A549 (cell line): ENCODE measurements at regions of chr5 and their contacts with region 1.

Region 1: GRCh38 chr5:140000332-140000731 is 42.8 kb downstream of the NRG2 start:
- DNase-seq: no peak
- ATAC-seq: no peak
- H3K4me3 ChIP-seq: no peak overlapping the region
- H3K27ac ChIP-seq: no peak overlapping the region
- H3K4me1 ChIP-seq: no peaks in the 10 kb centered on the region
- CTCF ChIP-seq: no peak
- EP300 ChIP-seq: no peak
- POLR2A ChIP-seq: no peak
- RAD21 ChIP-seq: no peak

Region 2: DNA sequence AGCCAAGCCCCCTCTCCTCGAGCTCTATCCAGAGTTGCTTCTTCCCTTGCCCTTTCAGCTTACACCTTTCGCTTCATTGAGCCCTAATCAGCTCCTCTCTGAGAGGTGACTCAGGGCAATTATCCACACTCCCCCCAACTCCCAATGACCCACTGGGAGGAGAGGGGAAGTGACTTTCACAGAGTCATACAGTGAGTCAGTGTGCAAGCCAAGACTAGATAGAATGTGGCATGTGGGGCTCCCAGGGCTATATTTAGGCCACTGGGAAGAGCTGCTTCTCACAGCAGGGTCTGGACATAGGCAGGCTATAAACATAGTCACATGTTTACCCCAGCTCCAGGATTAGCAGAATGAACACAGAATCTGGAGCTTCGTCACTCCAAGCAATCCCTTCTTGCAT is 14.6 kb before region 1 on chr5:
- CTCF ChIA-PET with region 1: interaction called, 15 read pairs
- POLR2A ChIA-PET with region 1: no interaction called
- DNase-seq: peak; percentile 18 to 31
- ATAC-seq: peak; percentile 71 to 78
- H3K4me3 ChIP-seq: no peak overlapping the region
- H3K27ac ChIP-seq: no peak overlapping the region
- H3K4me1 ChIP-seq: no peaks in the 10 kb centered on the region
- CTCF ChIP-seq: no peak
- EP300 ChIP-seq: no peak
- POLR2A ChIP-seq: no peak
- RAD21 ChIP-seq: no peak